ENCODE measurements at regions of chr9 and their contacts with region 1.

Region 1: GRCh38 chr9:35553670-35554543 is 51.2 kb upstream of the TESK1 start:
- DNase-seq: no peak
- H3K4me3 ChIP-seq: no peak overlapping the region
- H3K27me3 ChIP-seq: no peaks in the 10 kb centered on the region
- CTCF ChIP-seq: peak; percentile 85

Region 2: GRCh38 chr9:35481347-35481975 is 72.4 kb before region 1 on chr9:
- CTCF ChIA-PET with region 1: interaction called, 68 read pairs
- POLR2A ChIA-PET with region 1: no interaction called
- DNase-seq: no peak
- H3K4me3 ChIP-seq: no peak overlapping the region
- H3K27me3 ChIP-seq: no peaks in the 10 kb centered on the region
- CTCF ChIP-seq: peak; percentile 87

Region 3: GRCh38 chr9:35489313-35490154 is 64.4 kb before region 1 on chr9 and contains the start of gene RUSC2:
- CTCF ChIA-PET with region 1: interaction called, 38 read pairs
- POLR2A ChIA-PET with region 1: no interaction called
- DNase-seq: peak; percentile 60
- H3K4me3 ChIP-seq: peak within 1 kb of the TSS; percentile 96
- H3K27me3 ChIP-seq: no peaks in the 10 kb centered on the region
- CTCF ChIP-seq: peak; percentile 35
- polyA plus RNA-seq, gene RUSC2: 19.6 and 43.3 TPM in 2 replicates

Region 4: DNA sequence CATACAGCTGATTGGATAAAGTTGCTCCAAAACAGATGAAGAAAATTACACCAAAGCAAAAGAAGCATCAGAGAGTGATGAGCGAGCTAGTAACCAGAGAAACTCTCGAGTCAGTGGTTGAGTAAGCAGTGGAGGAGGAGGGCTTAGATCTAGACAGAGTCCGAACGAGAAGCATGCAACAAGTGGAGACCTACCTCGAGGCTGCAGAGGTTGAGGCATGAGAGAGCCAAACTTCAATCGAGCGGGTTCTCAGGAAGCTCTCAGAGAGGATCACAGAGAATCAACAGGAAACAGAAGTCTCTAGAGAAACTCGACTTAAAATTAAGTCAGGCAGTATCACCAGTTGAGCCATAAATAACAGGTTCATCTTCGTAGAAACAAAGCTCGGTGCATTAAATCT is 57.9 kb before region 1 on chr9:
- CTCF ChIA-PET with region 1: interaction called, 10 read pairs
- POLR2A ChIA-PET with region 1: no interaction called
- DNase-seq: no peak
- H3K4me3 ChIP-seq: no peak overlapping the region
- H3K27me3 ChIP-seq: no peaks in the 10 kb centered on the region
- CTCF ChIP-seq: no peak

Region 5: GRCh38 chr9:35510745-35511428 is 43.0 kb before region 1 on chr9:
- CTCF ChIA-PET with region 1: interaction called, 49 read pairs
- POLR2A ChIA-PET with region 1: no interaction called
- DNase-seq: peak; percentile 99
- H3K4me3 ChIP-seq: no peak overlapping the region
- H3K27me3 ChIP-seq: no peaks in the 10 kb centered on the region
- CTCF ChIP-seq: peak; percentile 41

Region 6: DNA sequence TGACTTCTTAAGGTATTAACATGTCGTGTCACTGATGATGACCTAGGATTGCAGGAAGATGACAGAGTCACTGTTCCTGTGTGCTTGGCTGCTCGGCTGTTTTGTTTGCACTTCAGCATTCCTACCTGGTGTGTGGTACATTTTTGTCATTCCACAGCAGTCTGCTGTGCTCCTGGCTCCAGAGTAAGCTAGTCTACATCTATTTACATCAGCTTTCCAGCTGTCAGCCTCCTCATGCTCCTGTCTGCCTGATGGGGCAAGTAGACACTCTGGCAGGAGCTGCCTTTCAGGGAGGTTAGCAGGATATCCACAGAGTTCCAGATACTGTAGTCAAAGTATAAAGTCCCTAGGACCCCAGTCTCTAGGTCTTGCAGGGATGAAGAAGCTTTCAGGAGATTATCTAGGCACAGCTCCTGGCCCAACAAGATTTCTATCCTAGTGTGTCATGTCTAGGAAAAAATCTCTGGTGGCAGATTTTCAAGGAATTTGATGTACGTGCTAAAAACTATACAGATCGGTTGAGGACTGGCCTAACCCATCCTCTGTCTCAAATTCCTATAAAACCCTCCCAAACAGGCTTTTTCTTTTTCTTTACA is 35.6 kb before region 1 on chr9:
- CTCF ChIA-PET with region 1: interaction called, 49 read pairs
- POLR2A ChIA-PET with region 1: no interaction called
- DNase-seq: peak; percentile 75
- H3K4me3 ChIP-seq: no peak overlapping the region
- H3K27me3 ChIP-seq: no peaks in the 10 kb centered on the region
- CTCF ChIP-seq: no peak

Region 7: GRCh38 chr9:35538361-35539234 is 15.3 kb before region 1 on chr9:
- CTCF ChIA-PET with region 1: interaction called, 18 read pairs
- POLR2A ChIA-PET with region 1: no interaction called
- DNase-seq: peak; percentile 73
- H3K4me3 ChIP-seq: peak overlapping the region; percentile 52
- H3K27me3 ChIP-seq: no peaks in the 10 kb centered on the region
- CTCF ChIP-seq: no peak